ENCODE measurements at regions of chr4 and their contacts with region 1.

Region 1: GRCh38 chr4:169582205-169582604 is 30.2 kb downstream of the NEK1 start:
- DNase-seq: no peak
- ATAC-seq: no peak
- H3K4me3 Mint-ChIP-seq: no peak overlapping the region
- H3K27ac Mint-ChIP-seq: no peak overlapping the region
- H3K4me1 Mint-ChIP-seq: peaks cover 7% of the 10 kb centered on the region
- H3K27me3 Mint-ChIP-seq: no peaks in the 10 kb centered on the region
- CTCF ChIP-seq: no peak

Region 2: GRCh38 chr4:169566021-169566818 is 16.0 kb before region 1 on chr4:
- CTCF ChIA-PET with region 1: interaction called, 12 read pairs
- POLR2A ChIA-PET with region 1: no interaction called
- intact Hi-C with region 1: no loop called
- DNase-seq: peak; percentile 59
- ATAC-seq: peak; percentile 56
- H3K4me3 Mint-ChIP-seq: no peak overlapping the region
- H3K27ac Mint-ChIP-seq: peak overlapping the region; percentile 72
- H3K4me1 Mint-ChIP-seq: peaks cover 5% of the 10 kb centered on the region
- H3K27me3 Mint-ChIP-seq: no peaks in the 10 kb centered on the region
- CTCF ChIP-seq: peak; percentile 64

Region 3: DNA sequence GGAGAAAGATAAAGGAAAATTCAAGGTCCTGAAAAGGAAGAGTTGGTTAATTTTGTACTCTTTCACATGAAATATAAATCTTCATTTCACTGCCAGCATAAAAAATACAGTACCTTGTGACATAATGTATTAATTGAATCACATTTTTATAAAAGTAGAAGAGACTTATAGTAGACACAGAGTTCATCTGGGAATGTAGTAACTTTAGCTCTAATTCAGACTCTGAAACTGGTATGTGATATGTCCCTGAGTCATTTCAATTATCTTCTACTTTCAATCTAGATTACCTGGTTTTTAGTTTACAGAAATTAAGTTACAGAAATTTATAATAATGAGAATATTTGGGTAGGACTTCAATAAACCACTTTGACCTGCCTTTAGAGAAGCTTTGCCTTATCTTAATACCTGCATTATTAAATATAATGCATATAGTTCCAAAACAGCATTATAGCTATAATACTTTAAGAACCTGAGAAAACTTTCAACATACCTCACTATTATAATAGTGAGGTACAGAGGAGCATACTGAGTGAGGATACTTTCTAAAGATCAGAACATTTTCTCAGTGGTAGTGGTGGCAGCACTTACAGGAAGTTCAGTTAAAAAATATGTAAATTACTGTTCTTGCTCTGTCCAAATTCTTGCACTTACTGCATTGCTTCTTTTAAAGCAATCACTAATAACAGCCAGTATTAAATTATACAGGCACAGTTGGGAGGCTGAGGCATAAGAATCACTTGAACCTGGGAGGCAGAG is 19.0 kb after region 1 on chr4:
- CTCF ChIA-PET with region 1: no interaction called
- POLR2A ChIA-PET with region 1: no interaction called
- intact Hi-C with region 1: no loop called
- DNase-seq: no peak
- ATAC-seq: no peak
- H3K4me3 Mint-ChIP-seq: no peak overlapping the region
- H3K27ac Mint-ChIP-seq: no peak overlapping the region
- H3K4me1 Mint-ChIP-seq: peaks cover 21% of the 10 kb centered on the region
- H3K27me3 Mint-ChIP-seq: no peaks in the 10 kb centered on the region
- CTCF ChIP-seq: no peak